PC-3 (cell line): ENCODE measurements at regions of chr4 and their contacts with region 1.

Region 1: DNA sequence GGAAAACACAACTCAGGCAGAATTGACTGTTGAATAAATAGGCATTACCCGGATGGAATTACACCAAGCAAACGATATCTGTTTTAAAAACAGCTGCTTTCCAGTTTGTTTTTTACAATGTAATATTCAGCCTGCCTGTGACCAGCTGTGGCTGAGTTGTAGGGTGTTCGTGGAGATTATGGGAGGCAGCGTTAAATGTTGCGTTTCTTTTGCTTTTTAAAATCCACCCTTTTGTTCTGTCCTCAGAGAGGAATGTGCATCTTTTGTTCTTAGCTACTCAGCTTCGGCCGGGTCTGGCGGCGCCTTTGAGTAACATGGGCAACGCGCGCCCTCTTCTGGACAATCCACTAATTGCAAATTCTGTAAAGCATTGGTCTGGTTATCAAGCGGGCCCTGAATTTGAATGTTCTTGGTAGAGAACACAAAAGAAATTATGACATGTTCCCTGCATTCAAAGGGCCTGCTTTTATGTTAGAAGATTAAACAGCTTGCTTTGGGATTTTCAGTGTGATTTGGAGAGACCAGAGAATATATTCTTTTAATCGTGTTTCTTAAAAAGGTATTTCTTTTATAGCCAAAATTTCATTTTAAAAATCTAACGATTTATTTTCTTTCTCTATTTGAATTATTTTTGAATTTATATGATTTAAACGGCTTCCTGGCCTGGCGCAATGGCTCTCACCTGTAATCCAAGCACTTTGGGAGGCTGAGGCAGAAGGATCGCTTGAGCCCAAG is 76.3 kb upstream of the TRIM2 start:
- DNase-seq: peak; percentile 88
- ATAC-seq: peak; percentile 91
- H3K4me3 ChIP-seq: peak overlapping the region; percentile 47; the same call in 1 of the 2 replicates
- H3K27ac ChIP-seq: no peak overlapping the region
- H3K4me1 ChIP-seq: no peaks in the 10 kb centered on the region
- H3K27me3 ChIP-seq: no peaks in the 10 kb centered on the region
- CTCF ChIP-seq: peak; percentile 80

Region 2: DNA sequence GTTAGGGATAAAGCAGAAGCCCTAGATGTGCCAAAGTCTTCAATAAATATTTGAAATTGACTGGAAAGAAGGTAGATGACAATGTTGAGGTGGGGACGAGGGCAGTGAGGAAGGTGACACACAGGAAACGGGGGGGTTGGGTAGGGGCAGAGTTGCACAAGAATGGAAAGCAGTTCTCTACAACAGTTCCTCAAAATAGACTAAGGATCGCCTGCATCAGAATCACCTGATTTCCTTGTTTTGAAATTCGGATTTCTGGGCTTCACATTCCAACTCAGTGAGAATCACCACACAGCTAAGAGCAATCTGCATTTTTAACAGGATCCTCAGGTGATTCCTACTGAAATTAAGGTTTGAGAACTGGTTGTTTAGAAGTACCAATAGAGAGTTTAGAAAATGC is 277.6 kb before region 1 on chr4:
- CTCF ChIA-PET with region 1: interaction called, 7 read pairs
- POLR2A ChIA-PET with region 1: no interaction called
- intact Hi-C with region 1: loop called (anchors 1 kb)
- DNase-seq: peak; percentile 41
- ATAC-seq: no peak; the same call in 1 of the 2 replicates
- H3K4me3 ChIP-seq: no peak overlapping the region
- H3K27ac ChIP-seq: no peak overlapping the region
- H3K4me1 ChIP-seq: peaks cover 10% of the 10 kb centered on the region
- H3K27me3 ChIP-seq: no peaks in the 10 kb centered on the region
- CTCF ChIP-seq: no peak

Region 3: DNA sequence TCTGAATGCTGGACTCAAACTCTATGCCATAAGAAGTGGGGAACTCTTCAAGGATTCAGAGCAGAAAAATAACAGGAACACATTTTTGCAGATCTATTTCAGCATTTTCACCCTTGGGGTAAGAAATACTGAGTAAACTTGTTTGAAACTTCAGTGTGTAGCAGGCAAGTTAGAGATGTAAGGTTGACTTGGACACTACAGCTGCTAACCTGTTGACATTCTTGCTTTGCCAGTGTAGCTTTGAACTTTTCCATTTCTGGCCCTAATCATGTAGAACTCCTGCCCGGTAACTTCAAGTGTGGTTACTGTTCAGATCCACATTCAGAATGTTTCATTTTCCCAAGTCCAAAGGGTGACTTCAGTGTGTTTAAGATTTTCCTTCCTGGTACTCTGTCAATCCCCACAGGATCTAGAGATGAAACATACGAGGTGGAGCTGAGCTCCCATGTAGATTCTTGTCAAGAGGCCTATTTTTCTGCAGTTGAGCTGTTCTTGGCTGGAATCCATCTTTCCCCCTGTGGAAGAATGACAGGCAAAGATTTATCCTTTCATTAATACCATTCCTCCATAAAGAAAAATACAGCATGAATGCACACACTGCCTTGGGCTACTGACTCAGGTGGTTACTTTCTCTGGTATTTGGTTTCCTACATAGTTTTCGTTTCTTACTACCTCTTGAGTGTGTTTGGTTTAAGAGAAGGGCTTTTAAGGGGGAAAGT is 157.7 kb before region 1 on chr4:
- CTCF ChIA-PET with region 1: no interaction called
- POLR2A ChIA-PET with region 1: no interaction called
- intact Hi-C with region 1: loop called (anchors 1 kb)
- DNase-seq: peak; percentile 92
- ATAC-seq: peak; percentile 82
- H3K4me3 ChIP-seq: no peak overlapping the region; the same call in 1 of the 2 replicates
- H3K27ac ChIP-seq: peak overlapping the region; percentile 79
- H3K4me1 ChIP-seq: peaks cover 43% of the 10 kb centered on the region
- H3K27me3 ChIP-seq: no peaks in the 10 kb centered on the region
- CTCF ChIP-seq: no peak

Region 4: GRCh38 chr4:153083447-153083947 is 44.4 kb before region 1 on chr4:
- CTCF ChIA-PET with region 1: interaction called, 48 read pairs
- POLR2A ChIA-PET with region 1: no interaction called
- intact Hi-C with region 1: loop called (anchors 1 kb)
- DNase-seq: peak; percentile 80
- ATAC-seq: peak; percentile 84
- H3K4me3 ChIP-seq: no peak overlapping the region
- H3K27ac ChIP-seq: no peak overlapping the region
- H3K4me1 ChIP-seq: no peaks in the 10 kb centered on the region; the same call in 1 of the 2 replicates
- H3K27me3 ChIP-seq: no peaks in the 10 kb centered on the region
- CTCF ChIP-seq: peak; percentile 68